Endothelial cell of umbilical vein (primary cell): ENCODE measurements at regions of chr3 and their contacts with region 1.

Region 1: GRCh38 chr3:181709537-181710279 is 2.0 kb upstream of the SOX2 start:
- DNase-seq: peak; percentile 62
- H3K4me3 ChIP-seq: no peak overlapping the region
- H3K27ac ChIP-seq: no peak overlapping the region
- H3K4me1 ChIP-seq: no peaks in the 10 kb centered on the region
- H3K27me3 ChIP-seq: peaks cover 9% of the 10 kb centered on the region in 2 experiments
- CTCF ChIP-seq: peak; percentile 59 to 66
- POLR2A ChIP-seq: no peak

Region 2: DNA sequence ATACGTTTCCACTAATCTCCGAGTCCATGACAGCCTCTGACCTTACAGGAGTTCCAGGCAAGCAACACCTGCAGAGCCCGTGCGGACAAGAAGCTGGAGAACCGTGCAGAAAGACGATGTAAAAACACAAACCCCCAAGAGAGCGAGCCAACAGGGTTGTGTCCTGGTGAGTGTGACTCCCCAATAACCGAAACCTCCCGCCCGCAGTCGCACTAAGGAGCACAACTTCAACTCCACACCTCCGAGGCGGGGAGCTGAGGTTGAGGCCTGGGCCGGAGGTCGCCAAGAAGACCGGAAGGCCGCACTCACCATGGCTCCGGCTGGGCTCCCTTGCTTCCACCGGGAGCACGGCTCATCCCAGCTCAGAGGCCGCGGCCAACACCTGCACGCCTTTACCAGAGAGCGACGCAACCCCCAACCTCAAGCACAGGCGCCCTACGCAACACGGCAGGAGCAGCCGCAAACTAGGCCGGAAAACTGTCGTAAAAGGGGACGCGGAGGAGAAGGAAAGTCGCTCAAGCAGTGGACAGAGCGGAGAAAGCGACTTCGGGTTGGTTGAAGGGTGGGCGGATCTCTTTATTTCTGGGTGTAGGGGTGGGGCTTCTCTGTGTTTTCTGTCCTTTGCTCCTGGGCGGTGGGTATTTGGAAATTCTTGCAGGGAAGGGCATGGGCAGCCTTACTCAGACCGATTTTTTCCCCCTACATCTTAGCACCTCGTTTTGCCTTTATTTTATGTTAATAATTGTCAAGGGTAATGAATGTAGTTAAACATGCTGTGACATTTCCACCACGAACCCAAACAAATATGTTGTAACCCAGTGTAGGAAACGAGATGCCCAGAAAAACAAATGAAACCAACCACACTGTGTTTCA is 720.2 kb before region 1 on chr3 and contains the start of gene DNAJC19:
- CTCF ChIA-PET with region 1: no interaction called
- POLR2A ChIA-PET with region 1: no interaction called
- dilution Hi-C with region 1: no loop called
- intact Hi-C with region 1: loop called (anchors 10 kb)
- DNase-seq: peak; percentile 96
- H3K4me3 ChIP-seq: peak within 1 kb of the TSS; percentile 2 to 78 (median 52)
- H3K27ac ChIP-seq: peak within 1 kb of the TSS; percentile 5
- H3K4me1 ChIP-seq: peaks cover 6% of the 10 kb centered on the region
- H3K27me3 ChIP-seq: peaks cover 2 to 5% of the 10 kb centered on the region in 2 experiments
- CTCF ChIP-seq: no peak
- POLR2A ChIP-seq: peak; percentile 93
- total RNA-seq, gene DNAJC19: 43.4 and 50.6 TPM in 2 replicates

Region 3: DNA sequence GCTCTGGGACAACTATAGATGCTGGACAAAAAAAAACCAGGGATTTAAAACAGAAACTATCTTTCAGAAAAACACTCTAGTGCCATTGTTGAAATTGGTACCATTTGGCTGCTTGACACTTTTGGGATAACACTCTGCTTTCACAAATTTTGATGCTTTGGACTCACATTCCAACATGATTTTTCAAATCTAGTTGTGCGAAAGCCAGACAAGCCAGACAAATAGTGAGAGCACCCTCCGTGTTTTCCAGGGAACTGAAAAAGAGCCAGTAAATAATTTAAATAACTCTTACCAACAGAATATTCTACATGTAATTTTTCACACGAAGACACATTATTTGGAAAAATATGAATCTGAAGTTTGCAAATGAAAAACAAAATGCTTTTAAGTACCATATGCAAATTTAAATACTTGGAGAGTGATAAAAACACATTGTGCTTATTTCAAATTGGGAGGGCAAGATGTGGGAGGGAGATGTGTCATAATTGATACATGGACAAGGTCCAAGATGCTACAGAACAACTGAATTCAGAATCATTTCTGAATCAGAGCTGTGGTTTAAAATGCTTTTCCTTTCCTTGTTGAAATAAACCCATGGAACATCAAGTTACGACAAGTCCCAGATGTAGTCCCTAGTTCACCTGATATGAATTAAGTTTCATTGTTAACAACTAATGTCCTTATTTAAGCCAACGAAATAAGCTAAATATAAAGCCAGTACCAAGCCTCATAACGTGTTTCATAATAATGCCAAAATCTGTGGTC is 142.2 kb before region 1 on chr3:
- CTCF ChIA-PET with region 1: interaction called, 15 read pairs
- POLR2A ChIA-PET with region 1: no interaction called
- dilution Hi-C with region 1: no loop called
- intact Hi-C with region 1: no loop called
- DNase-seq: no peak
- H3K4me3 ChIP-seq: no peak overlapping the region
- H3K27ac ChIP-seq: no peak overlapping the region
- H3K4me1 ChIP-seq: peaks cover 3% of the 10 kb centered on the region
- H3K27me3 ChIP-seq: no peaks in the 10 kb centered on the region
- CTCF ChIP-seq: no peak
- POLR2A ChIP-seq: no peak

Region 4: DNA sequence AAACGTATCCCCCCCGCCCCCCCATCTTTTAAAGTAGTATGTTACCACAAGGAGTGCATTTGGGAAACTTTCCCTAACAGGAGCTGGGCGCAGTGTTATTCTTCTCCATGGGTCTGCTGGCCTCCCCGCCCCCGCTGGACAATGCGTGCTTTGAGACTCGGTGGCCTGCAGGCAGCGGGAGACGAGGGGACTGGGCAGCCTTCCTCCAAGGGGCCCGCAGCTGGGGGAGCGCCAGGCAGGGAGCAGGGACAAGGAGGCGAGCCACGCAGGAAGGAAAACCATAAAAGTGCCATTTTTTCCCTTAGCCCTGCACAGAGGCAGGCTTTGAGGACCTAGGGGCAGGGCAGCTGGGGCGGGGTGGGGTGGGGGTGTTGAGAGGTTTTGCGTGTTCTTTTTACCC is 16.1 kb after region 1 on chr3:
- CTCF ChIA-PET with region 1: no interaction called
- POLR2A ChIA-PET with region 1: no interaction called
- dilution Hi-C with region 1: no loop called
- intact Hi-C with region 1: no loop called
- DNase-seq: no peak
- H3K4me3 ChIP-seq: no peak overlapping the region
- H3K27ac ChIP-seq: no peak overlapping the region
- H3K4me1 ChIP-seq: no peaks in the 10 kb centered on the region
- H3K27me3 ChIP-seq: peaks cover 20 to 21% of the 10 kb centered on the region in 2 experiments
- CTCF ChIP-seq: no peak
- POLR2A ChIP-seq: no peak

Region 5: GRCh38 chr3:181899702-181900101 is 190.0 kb after region 1 on chr3:
- CTCF ChIA-PET with region 1: interaction called, 6 read pairs
- POLR2A ChIA-PET with region 1: no interaction called
- dilution Hi-C with region 1: no loop called
- intact Hi-C with region 1: loop called (anchors 1 kb)
- DNase-seq: no peak
- H3K4me3 ChIP-seq: no peak overlapping the region
- H3K27ac ChIP-seq: no peak overlapping the region
- H3K4me1 ChIP-seq: no peaks in the 10 kb centered on the region
- H3K27me3 ChIP-seq: no peaks in the 10 kb centered on the region
- CTCF ChIP-seq: no peak
- POLR2A ChIP-seq: no peak

Region 6: GRCh38 chr3:182490596-182491491 is 781.1 kb after region 1 on chr3:
- CTCF ChIA-PET with region 1: no interaction called
- POLR2A ChIA-PET with region 1: no interaction called
- dilution Hi-C with region 1: no loop called
- intact Hi-C with region 1: loop called (anchors 1 kb)
- DNase-seq: peak; percentile 54
- H3K4me3 ChIP-seq: no peak overlapping the region
- H3K27ac ChIP-seq: no peak overlapping the region
- H3K4me1 ChIP-seq: no peaks in the 10 kb centered on the region
- H3K27me3 ChIP-seq: no peaks in the 10 kb centered on the region
- CTCF ChIP-seq: peak; percentile 24 to 36
- POLR2A ChIP-seq: no peak